ENCODE measurements at regions of chr14 and their contacts with region 1.

Region 1: DNA sequence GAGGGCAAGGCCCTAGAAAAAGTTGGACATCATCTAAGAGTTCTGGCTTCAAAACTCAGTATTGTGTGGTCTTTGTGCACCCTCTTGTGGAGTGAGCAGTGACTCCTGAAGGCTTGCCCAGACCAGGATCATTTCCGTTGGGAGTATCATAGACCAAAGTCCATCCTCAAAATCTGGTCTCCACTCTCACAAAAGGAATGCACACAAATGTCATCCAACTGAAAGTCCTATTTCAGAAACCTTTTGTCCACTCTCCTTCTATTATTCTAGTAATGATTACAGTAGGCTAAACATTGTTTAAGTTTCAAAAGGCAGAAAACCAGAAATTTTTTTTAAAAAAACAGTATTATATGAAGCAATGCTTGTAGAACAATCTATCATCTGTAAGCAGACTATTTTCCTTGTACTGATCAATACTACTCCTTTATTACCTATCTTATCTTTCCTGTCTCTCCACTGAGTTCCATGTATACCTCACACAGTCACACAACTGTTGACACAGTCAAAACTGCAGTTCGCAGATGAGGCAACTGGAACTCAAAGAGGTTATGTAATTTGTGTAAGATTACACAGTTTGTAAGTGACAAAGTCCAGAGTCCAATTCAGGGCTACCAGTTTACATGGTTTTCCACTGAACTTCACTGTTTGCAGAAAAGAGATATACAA is 41.4 kb downstream of the COX16 start:
- DNase-seq: peak in 4 of 6 donors; percentile 28 to 68 (median 63)
- ATAC-seq: peak; percentile 77 to 92 (median 86)
- H3K4me3 ChIP-seq: no peak overlapping the region
- H3K27ac ChIP-seq: peak overlapping the region; percentile 32 to 67 (median 51)
- H3K4me1 ChIP-seq: peaks cover 3 to 24% (median 14%) of the 10 kb centered on the region in 3 donors
- H3K27me3 ChIP-seq: no peaks in the 10 kb centered on the region
- CTCF ChIP-seq: peak in 3 of 4 donors; percentile 32 to 48 (median 34)

Region 2: DNA sequence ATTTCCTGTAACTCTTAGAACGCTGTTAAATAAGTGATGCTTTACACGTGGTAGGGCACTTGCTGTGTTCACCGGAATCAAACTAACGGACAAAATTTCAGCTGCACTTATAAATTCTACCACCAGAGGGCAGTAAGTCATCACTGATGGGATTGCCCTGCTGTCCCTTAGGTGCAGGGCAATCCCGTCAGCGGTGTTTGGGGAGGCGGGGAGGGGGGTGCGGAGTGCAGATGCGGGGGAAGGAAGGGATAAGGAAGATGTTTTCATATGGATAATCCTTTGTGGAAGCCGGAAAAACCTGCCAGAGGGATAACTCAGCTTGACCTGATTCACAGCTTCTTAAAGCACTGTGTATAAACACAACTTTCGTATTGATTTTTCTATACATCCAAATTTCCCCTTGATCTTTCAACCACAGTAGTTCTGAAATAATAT is 499.3 kb before region 1 on chr14:
- intact Hi-C with region 1: loop called in 1 of 3 experiments (anchors 10 kb)
- DNase-seq: peak in 4 of 6 donors; percentile 22 to 72 (median 34)
- ATAC-seq: peak; percentile 69 to 92 (median 90)
- H3K4me3 ChIP-seq: no peak overlapping the region
- H3K27ac ChIP-seq: no peak overlapping the region
- H3K4me1 ChIP-seq: no peaks in the 10 kb centered on the region
- H3K27me3 ChIP-seq: no peaks in the 10 kb centered on the region
- CTCF ChIP-seq: peak; percentile 56 to 80 (median 76)

Region 3: DNA sequence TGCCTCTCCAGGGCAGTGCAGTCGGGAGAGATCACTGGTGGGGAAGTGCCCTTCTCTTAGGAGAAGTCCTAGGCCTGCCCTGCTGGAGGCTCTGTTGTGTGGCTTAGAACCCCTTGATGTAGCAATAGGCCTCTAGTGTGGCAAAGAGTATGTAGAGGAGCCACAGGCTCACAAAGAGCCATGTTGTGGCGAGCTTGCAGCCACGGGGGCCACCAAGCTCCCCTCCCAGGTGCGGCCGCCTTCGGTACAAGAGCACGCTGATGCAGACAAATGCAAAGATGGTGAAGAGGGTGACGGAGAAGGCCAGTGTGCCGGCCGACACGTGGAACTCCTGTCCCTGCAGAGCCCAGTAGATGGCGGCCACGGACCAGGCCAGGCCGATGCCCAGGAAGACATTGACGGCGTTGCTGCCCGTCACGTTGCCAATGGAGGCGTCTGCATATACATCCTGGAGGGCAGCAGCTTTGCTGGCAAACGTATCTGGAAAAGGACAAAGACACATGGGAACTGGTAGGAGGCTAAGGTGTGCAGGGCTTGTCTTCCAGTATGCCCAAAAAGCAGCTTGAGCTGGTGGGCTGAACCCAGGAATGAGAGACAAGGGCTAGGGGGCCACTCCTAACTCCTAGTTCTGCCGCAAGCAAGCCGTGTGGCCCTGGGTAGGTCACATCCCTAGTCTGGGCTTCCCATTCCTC is 272.1 kb before region 1 on chr14:
- intact Hi-C with region 1: loop called in 1 of 3 experiments (anchors 10 kb)
- DNase-seq: peak; percentile 70 to 94 (median 84)
- ATAC-seq: peak; percentile 93 to 99 (median 98)
- H3K4me3 ChIP-seq: no peak overlapping the region
- H3K27ac ChIP-seq: no peak overlapping the region
- H3K4me1 ChIP-seq: peaks cover 0 to 5% (median 0%) of the 10 kb centered on the region in 3 donors
- H3K27me3 ChIP-seq: no peaks in the 10 kb centered on the region
- CTCF ChIP-seq: peak; percentile 54 to 77 (median 69)

Region 4: DNA sequence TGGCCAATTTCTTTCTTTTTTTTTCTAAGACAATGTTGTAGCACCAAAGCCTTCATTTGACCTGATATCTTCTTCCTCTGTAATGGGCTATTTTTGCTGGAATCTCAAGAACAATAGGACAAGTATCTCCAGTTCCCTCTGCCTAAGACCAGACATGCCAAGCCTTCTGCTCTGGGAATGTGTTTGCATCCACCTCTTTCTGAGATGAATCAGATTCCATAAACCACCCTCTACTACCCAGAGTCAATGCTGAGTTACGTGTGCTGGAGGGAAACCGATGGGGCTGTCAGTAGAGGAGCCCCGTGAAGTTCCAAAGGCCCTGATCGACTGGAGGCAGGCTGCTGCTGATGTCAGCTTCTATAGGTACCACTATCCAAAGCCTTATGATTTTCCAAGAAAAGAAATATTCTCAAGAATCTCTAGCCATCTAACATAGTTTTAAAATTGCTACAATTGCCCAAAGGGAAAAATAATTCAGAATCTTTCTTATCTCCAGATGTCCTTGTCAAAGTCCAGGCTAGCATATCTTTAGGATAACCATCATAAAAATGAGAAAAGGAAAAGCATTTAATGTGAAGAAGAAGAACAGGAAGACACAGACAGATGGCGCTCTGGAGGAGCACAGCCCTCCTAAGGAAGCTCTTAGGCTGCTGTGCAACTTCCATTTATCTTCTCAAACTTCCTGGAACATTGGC is 231.3 kb before region 1 on chr14:
- intact Hi-C with region 1: loop called in 1 of 3 experiments (anchors 10 kb)
- DNase-seq: no peak
- ATAC-seq: peak in 3 of 4 donors; percentile 70 to 76 (median 74)
- H3K4me3 ChIP-seq: no peak overlapping the region
- H3K27ac ChIP-seq: no peak overlapping the region
- H3K4me1 ChIP-seq: peaks cover 0 to 4% (median 0%) of the 10 kb centered on the region in 3 donors
- H3K27me3 ChIP-seq: no peaks in the 10 kb centered on the region
- CTCF ChIP-seq: peak in 2 of 4 donors; percentile 13 to 20

Region 5: DNA sequence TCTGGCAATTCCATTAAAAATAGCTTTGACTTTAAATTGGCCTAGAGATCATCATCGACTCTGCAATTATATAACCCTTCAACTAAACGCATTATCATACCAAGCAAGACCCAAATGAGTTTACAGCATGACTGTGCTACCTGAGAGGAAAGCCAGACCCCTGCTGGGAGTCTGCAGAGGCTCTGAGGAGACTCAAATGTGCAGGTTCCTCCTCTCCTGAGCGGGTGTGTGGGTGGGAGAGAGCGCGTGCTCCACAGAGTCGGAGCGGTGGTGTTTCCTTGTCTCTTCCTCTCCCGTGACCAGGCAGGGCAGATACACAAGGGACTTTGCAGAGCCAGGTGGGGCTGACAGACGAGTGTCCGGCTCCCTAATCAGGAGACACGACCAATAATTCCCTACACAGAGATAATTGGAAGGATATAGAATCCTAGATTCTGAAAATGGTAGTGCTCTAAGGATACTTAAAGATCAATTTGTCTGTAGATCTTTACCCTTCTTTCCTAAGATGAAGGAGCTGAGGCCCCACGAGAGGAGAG is 203.4 kb before region 1 on chr14:
- intact Hi-C with region 1: no loop called
- DNase-seq: no peak
- ATAC-seq: no peak
- H3K4me3 ChIP-seq: no peak overlapping the region
- H3K27ac ChIP-seq: no peak overlapping the region
- H3K4me1 ChIP-seq: no peaks in the 10 kb centered on the region
- H3K27me3 ChIP-seq: no peaks in the 10 kb centered on the region
- CTCF ChIP-seq: no peak

Measured in pancreas (tissue), 10 donors.